ENCODE measurements at regions of chr2 and their contacts with region 1.

Region 1: DNA sequence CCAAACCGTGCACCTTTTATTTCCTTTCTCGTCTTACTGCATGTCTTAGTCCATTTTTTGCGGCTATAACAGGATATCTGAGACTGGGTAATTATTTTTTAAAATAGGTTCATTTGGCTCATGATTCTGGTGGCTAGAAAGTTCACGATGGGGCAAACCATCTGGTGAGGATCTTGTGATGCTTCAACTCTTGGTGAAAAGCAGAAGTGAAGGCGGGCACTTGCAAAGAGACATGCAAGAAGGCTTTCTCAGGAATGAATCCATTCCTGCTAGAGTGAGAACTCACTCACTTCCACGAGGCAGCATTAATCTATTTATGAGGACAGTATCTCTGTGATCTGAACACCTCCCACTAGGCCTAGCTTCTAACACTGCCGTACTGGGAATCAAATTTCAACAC is 327.1 kb upstream of the RBMS1 start:
- DNase-seq: no peak
- ATAC-seq: no peak
- H3K4me3 ChIP-seq: no peak overlapping the region
- H3K27ac ChIP-seq: no peak overlapping the region
- H3K4me1 ChIP-seq: no peaks in the 10 kb centered on the region
- H3K27me3 ChIP-seq: no peaks in the 10 kb centered on the region
- CTCF ChIP-seq: no peak
- POLR2A ChIP-seq: no peak

Region 2: DNA sequence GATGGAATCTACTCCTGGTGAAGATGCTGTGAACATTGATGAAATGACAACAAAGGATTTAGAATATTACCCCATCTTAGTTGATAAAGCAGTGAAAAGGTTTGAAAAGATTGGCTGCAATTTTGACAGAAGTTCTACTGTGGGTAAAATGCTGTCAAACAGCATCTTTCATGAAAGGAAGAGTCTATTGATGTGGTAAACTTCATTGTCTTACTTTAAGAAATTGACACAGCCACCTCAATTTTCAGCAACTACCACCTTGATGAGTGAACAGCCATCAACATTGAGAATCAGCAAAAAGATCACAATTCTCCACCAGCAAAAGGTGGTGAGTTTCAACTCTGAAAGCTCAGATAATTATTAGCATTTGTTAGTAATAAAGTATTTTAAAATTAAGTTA is 16.8 kb before region 1 on chr2:
- in situ Hi-C with region 1: no loop called
- intact Hi-C with region 1: loop called (anchors 1 kb)
- DNase-seq: no peak
- ATAC-seq: no peak
- H3K4me3 ChIP-seq: no peak overlapping the region
- H3K27ac ChIP-seq: no peak overlapping the region
- H3K4me1 ChIP-seq: no peaks in the 10 kb centered on the region
- H3K27me3 ChIP-seq: no peaks in the 10 kb centered on the region
- CTCF ChIP-seq: no peak
- POLR2A ChIP-seq: no peak